Ascending aorta (tissue), 2 donors: ENCODE measurements at regions of chr15 and their contacts with region 1.

Region 1: DNA sequence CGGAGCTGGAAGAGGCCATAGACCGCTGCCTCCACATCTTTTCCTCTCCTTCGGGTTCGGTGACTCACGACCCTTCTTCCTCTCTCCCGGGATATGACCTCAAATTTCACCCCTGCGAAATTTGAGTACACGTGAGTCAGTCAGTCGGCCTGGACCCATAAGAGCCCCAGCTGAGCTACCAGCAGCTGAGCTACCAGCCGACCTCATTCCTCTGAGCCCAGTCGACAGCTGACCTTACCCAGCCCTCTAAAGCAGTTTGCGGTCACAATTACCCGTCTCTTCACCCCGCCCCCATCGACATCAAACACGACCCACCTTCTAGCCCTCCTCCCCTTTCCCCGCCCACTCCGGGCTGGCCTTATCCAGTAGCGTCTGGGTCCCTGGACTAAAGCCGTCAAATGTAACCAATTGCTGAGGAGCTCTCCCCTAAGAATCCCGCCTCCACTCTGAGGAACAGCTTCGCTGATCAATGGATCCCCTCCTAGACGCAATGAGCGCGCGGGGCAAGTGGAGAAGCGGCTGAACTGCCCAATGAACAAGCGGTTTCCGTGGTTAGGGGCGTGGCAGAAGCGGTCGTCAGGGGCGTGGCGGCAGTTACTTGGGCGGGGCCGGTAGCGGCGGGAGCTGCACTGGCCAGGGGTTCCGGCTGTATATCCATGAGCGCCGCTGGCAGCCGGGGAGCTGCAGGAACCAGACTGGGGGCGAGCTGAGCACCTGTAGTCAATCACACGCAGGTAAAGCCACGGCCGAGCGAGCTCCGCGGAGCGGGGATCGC is at the start of gene ABHD2:
- DNase-seq: peak; percentile 99 to 100
- H3K4me3 ChIP-seq: peak within 1 kb of the TSS; percentile 79 to 83
- H3K27ac ChIP-seq: peak within 1 kb of the TSS; percentile 96 to 98
- H3K4me1 ChIP-seq: peaks cover 6 to 28% of the 10 kb centered on the region in 2 donors
- H3K27me3 ChIP-seq: no peaks in the 10 kb centered on the region
- CTCF ChIP-seq: no peak
- total RNA-seq, gene ABHD2: 228 TPM

Region 2: DNA sequence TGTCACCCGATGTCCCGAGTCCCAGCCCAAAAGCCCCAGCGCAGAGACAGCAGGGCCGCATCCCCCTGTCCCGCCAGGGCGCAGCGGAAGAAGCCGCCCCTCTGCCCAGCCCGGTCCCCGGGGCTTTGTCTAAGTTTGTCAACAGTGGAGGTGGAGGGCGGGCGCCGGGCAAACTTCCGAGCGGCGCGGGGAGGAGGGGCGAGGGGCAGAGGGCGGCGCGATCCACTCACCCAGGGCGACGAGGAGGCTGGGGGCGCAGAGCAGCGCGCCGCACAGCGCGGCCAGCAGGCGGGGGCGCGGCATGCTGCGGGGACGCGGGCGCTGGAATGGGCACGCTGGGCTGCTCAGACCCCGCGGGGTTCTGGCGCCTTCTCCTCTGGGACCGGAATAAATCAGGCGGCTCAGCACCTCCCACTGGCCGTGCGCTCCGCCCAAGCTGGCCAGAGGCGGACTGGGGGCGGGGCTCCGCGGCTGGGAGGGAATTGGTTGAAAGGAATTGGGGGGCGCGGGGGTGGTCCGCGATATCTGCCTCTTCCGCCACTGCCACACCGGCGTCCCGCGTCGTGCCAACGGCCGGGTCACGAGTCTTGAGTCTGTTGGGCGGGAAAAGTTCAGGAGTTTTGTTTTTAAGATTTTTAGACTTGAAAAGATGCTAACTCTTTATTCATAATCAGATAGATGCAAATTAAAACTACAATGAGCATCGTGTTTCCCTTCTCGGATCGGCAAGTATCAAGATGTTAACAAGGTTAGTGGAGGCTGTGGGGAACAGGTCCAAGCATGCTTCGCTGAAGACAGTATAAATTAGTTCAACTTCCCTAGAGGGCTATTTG is 174.8 kb before region 1 on chr15 and contains the start of gene MFGE8:
- intact Hi-C with region 1: loop called (anchors 2 kb)
- DNase-seq: peak in 1 of 2 donors; percentile 91
- H3K4me3 ChIP-seq: peak within 1 kb of the TSS; percentile 88 to 89
- H3K27ac ChIP-seq: peak within 1 kb of the TSS; percentile 94
- H3K4me1 ChIP-seq: peaks cover 22 to 41% of the 10 kb centered on the region in 2 donors
- H3K27me3 ChIP-seq: no peaks in the 10 kb centered on the region
- CTCF ChIP-seq: peak in 2 of 3 experiments; percentile 3 to 57
- total RNA-seq, gene MFGE8: 1,738 TPM

Region 3: GRCh38 chr15:89057504-89058133 is 30.4 kb before region 1 on chr15:
- intact Hi-C with region 1: loop called (anchors 2 kb)
- DNase-seq: peak; percentile 34 to 92
- H3K4me3 ChIP-seq: no peak overlapping the region
- H3K27ac ChIP-seq: peak overlapping the region in 1 of 2 donors; percentile 50
- H3K4me1 ChIP-seq: peaks cover 0 to 21% of the 10 kb centered on the region in 2 donors
- H3K27me3 ChIP-seq: no peaks in the 10 kb centered on the region
- CTCF ChIP-seq: peak; percentile 97 to 98 (median 98)

Region 4: GRCh38 chr15:89119489-89120123 is 31.6 kb after region 1 on chr15:
- intact Hi-C with region 1: loop called (anchors 2 kb)
- DNase-seq: peak in 1 of 2 donors; percentile 85
- H3K4me3 ChIP-seq: no peak overlapping the region
- H3K27ac ChIP-seq: peak overlapping the region; percentile 93 to 96
- H3K4me1 ChIP-seq: peaks cover 14 to 73% of the 10 kb centered on the region in 2 donors
- H3K27me3 ChIP-seq: no peaks in the 10 kb centered on the region
- CTCF ChIP-seq: no peak

Region 5: DNA sequence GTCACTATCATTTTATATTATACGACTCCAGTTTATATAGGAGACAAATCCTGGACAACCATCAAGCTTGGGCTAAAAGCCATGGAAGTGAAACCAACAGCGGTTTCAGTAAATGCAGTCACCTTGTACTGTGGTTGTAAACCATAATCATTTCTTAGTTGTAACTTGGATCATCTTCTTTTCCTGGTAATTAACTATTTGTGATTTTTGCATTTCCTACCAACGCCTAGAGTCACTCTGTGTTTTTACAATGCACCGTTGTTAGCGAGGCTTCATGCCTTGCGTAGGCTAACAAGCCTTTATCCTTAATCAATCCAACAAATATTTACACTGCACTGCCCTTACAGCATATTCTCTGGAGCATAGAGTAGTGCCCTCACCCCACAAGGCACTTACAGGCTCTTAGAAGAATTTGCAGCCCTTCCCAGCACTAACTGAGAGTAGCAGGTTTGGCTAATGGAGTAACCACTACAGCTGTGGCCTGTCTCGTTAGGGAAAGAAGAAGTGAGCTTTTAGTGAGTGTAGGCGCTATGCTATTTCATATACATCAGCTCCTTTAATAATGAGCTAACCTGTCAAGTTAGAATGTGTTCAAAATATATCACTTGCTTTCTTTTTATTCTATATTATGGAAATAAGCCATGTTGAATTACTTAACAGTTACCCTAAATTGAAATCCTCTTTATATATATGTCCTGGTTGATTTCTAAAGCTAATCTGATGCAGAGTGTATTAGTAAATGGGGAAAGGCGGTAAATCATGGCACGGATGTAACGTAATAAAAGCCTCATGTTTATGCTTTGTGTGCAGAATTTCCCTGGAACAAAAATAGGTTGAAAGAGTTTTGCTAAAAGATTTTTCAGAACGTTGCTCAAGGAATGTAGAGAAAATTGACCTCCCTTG is 63.0 kb after region 1 on chr15:
- intact Hi-C with region 1: no loop called
- DNase-seq: no peak
- H3K4me3 ChIP-seq: no peak overlapping the region
- H3K27ac ChIP-seq: no peak overlapping the region
- H3K4me1 ChIP-seq: no peaks in the 10 kb centered on the region
- H3K27me3 ChIP-seq: no peaks in the 10 kb centered on the region
- CTCF ChIP-seq: no peak

Region 6: GRCh38 chr15:89167267-89168176 is 79.5 kb after region 1 on chr15:
- intact Hi-C with region 1: loop called (anchors 1 kb)
- DNase-seq: peak; percentile 59 to 85
- H3K4me3 ChIP-seq: no peak overlapping the region
- H3K27ac ChIP-seq: peak overlapping the region; percentile 83 to 86
- H3K4me1 ChIP-seq: peaks cover 12 to 39% of the 10 kb centered on the region in 2 donors
- H3K27me3 ChIP-seq: no peaks in the 10 kb centered on the region
- CTCF ChIP-seq: no peak

Region 7: DNA sequence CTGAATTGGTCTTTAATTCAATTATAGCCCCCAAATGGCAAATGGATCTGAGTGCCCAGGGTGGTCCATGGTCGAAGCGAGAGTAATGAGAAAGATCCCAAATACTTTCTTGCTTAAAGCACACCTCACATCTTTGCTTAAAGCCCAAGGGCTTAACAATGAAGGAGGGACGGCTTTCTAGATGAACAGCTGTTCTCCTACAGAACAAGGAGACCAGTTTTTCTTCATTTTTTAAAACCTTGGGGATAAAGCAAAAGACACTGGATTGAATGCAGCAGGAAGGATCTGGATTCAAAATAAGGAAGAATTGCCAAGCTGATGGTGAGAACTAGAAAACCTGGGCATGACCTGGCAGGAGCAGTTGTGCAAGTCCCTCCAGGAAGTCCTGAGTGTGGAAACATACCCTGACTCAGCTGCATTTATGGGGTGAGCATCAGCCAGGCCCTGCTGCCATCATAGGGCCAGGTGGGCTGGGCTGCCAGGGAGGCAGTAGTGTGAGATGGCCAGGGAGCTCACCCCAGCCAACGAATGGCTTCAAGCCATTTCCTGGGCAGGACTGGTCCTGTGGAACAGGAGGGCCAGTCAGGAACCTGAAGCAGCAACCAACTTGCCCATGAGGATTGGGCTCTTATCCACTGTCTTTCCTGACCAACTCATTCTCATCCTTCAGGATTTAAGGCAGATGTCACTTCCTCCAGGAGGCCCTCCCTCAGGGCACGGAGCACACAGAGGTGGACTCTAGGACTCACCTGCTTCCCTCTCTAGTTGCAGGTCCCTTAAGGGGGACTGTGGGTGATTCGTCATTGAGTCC is 426.8 kb after region 1 on chr15:
- intact Hi-C with region 1: no loop called
- DNase-seq: peak in 1 of 2 donors; percentile 38
- H3K4me3 ChIP-seq: no peak overlapping the region
- H3K27ac ChIP-seq: no peak overlapping the region
- H3K4me1 ChIP-seq: no peaks in the 10 kb centered on the region
- H3K27me3 ChIP-seq: no peaks in the 10 kb centered on the region
- CTCF ChIP-seq: no peak

Region 8: GRCh38 chr15:89599021-89599420 is 511.0 kb after region 1 on chr15:
- intact Hi-C with region 1: no loop called
- DNase-seq: no peak
- H3K4me3 ChIP-seq: no peak overlapping the region
- H3K27ac ChIP-seq: no peak overlapping the region
- H3K4me1 ChIP-seq: no peaks in the 10 kb centered on the region
- H3K27me3 ChIP-seq: no peaks in the 10 kb centered on the region
- CTCF ChIP-seq: no peak